Panc1 (cell line): ENCODE measurements at regions of chr18 and their contacts with region 1.

Region 1: GRCh38 chr18:26963292-26963691 is 97.8 kb upstream of the AQP4 start:
- DNase-seq: no peak
- ATAC-seq: no peak
- H3K4me3 ChIP-seq: no peak overlapping the region
- H3K27ac ChIP-seq: no peak overlapping the region
- H3K4me1 ChIP-seq: no peaks in the 10 kb centered on the region
- H3K27me3 ChIP-seq: no peaks in the 10 kb centered on the region
- CTCF ChIP-seq: peak; percentile 21; the same call in 1 of the 2 replicates

Region 2: GRCh38 chr18:26322890-26323653 is 640.2 kb before region 1 on chr18:
- CTCF ChIA-PET with region 1: interaction called, 13 read pairs
- POLR2A ChIA-PET with region 1: no interaction called
- in situ Hi-C with region 1: no loop called
- intact Hi-C with region 1: no loop called
- DNase-seq: no peak
- ATAC-seq: no peak
- H3K4me3 ChIP-seq: no peak overlapping the region
- H3K27ac ChIP-seq: no peak overlapping the region
- H3K4me1 ChIP-seq: no peaks in the 10 kb centered on the region
- H3K27me3 ChIP-seq: no peaks in the 10 kb centered on the region
- CTCF ChIP-seq: no peak

Region 3: GRCh38 chr18:27520401-27520800 is 557.1 kb after region 1 on chr18:
- CTCF ChIA-PET with region 1: no interaction called
- POLR2A ChIA-PET with region 1: no interaction called
- in situ Hi-C with region 1: no loop called
- intact Hi-C with region 1: no loop called
- DNase-seq: no peak
- ATAC-seq: no peak
- H3K4me3 ChIP-seq: no peak overlapping the region
- H3K27ac ChIP-seq: no peak overlapping the region
- H3K4me1 ChIP-seq: no peaks in the 10 kb centered on the region
- H3K27me3 ChIP-seq: no peaks in the 10 kb centered on the region
- CTCF ChIP-seq: no peak